B cell (primary cell): ENCODE measurements at regions of chr16 and their contacts with region 1.

Region 1: GRCh38 chr16:14586637-14587305 is 43.3 kb downstream of the PARN start:
- DNase-seq: no peak
- ATAC-seq: no peak
- H3K4me3 ChIP-seq: no peak overlapping the region
- H3K4me3 Mint-ChIP-seq: no peak overlapping the region
- H3K27ac ChIP-seq: no peak overlapping the region
- H3K27ac Mint-ChIP-seq: no peak overlapping the region
- H3K4me1 ChIP-seq: no peaks in the 10 kb centered on the region
- H3K4me1 Mint-ChIP-seq: peaks cover 17% of the 10 kb centered on the region
- H3K27me3 ChIP-seq: no peaks in the 10 kb centered on the region
- H3K27me3 Mint-ChIP-seq: no peaks in the 10 kb centered on the region
- CTCF ChIP-seq: no peak

Region 2: GRCh38 chr16:14378131-14378551 is 208.6 kb before region 1 on chr16:
- CTCF ChIA-PET with region 1: no interaction called
- POLR2A ChIA-PET with region 1: interaction called, 10 read pairs
- intact Hi-C with region 1: no loop called
- DNase-seq: no peak
- ATAC-seq: no peak
- H3K4me3 ChIP-seq: no peak overlapping the region
- H3K4me3 Mint-ChIP-seq: no peak overlapping the region
- H3K27ac ChIP-seq: no peak overlapping the region
- H3K27ac Mint-ChIP-seq: no peak overlapping the region
- H3K4me1 ChIP-seq: no peaks in the 10 kb centered on the region
- H3K4me1 Mint-ChIP-seq: no peaks in the 10 kb centered on the region
- H3K27me3 ChIP-seq: no peaks in the 10 kb centered on the region
- H3K27me3 Mint-ChIP-seq: no peaks in the 10 kb centered on the region
- CTCF ChIP-seq: no peak

Region 3: GRCh38 chr16:14564861-14565687 is 21.7 kb before region 1 on chr16:
- CTCF ChIA-PET with region 1: no interaction called
- POLR2A ChIA-PET with region 1: no interaction called
- intact Hi-C with region 1: no loop called
- DNase-seq: no peak
- ATAC-seq: no peak
- H3K4me3 ChIP-seq: no peak overlapping the region
- H3K4me3 Mint-ChIP-seq: no peak overlapping the region
- H3K27ac ChIP-seq: no peak overlapping the region
- H3K27ac Mint-ChIP-seq: no peak overlapping the region
- H3K4me1 ChIP-seq: no peaks in the 10 kb centered on the region
- H3K4me1 Mint-ChIP-seq: no peaks in the 10 kb centered on the region
- H3K27me3 ChIP-seq: no peaks in the 10 kb centered on the region
- H3K27me3 Mint-ChIP-seq: no peaks in the 10 kb centered on the region
- CTCF ChIP-seq: no peak